ENCODE measurements at regions of chr9 and their contacts with region 1.

Region 1: DNA sequence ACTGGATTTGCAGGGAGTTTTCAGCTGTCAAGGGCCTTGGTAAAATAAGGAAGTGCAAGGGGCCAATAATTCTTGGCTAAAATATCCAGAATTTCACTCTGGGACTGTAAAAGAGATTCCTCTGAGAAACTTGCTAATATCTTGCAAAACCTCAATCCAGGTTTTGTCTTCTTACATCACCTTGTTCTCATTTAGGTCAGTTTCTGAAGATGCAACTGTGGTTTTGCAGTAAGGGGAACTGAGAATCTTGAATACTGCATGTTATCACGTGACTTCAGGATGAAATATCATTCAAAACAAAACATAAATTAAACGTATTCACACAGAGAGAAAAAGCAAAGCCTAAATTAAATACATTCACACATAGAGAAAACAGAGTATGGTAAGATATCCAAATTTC is 35.0 kb upstream of the RIC1 start:
- DNase-seq: no peak
- H3K4me3 ChIP-seq: no peak overlapping the region
- H3K4me3 Mint-ChIP-seq: no peak overlapping the region
- H3K27ac Mint-ChIP-seq: no peak overlapping the region
- H3K4me1 ChIP-seq: no peaks in the 10 kb centered on the region
- H3K4me1 Mint-ChIP-seq: no peaks in the 10 kb centered on the region
- H3K27me3 ChIP-seq: no peaks in the 10 kb centered on the region
- H3K27me3 Mint-ChIP-seq: peaks cover 3% of the 10 kb centered on the region
- CTCF ChIP-seq: no peak

Region 2: GRCh38 chr9:4984621-4985385 is 609.1 kb before region 1 on chr9 and contains the start of gene JAK2:
- CTCF ChIA-PET with region 1: no interaction called
- POLR2A ChIA-PET with region 1: no interaction called
- intact Hi-C with region 1: loop called (anchors 10 kb)
- DNase-seq: peak; percentile 89 to 90
- H3K4me3 ChIP-seq: peak within 1 kb of the TSS; percentile 63
- H3K4me3 Mint-ChIP-seq: peak within 1 kb of the TSS; percentile 76
- H3K27ac Mint-ChIP-seq: peak within 1 kb of the TSS; percentile 87
- H3K4me1 ChIP-seq: peaks cover 3% of the 10 kb centered on the region; the same call in 1 of the 2 replicates
- H3K4me1 Mint-ChIP-seq: peaks cover 15% of the 10 kb centered on the region
- H3K27me3 ChIP-seq: no peaks in the 10 kb centered on the region
- H3K27me3 Mint-ChIP-seq: peaks cover 5% of the 10 kb centered on the region
- CTCF ChIP-seq: peak; percentile 18 to 28
- total RNA-seq, gene JAK2: 0.86 and 1.4 TPM in 2 replicates

Region 3: GRCh38 chr9:5696884-5697283 is 103.0 kb after region 1 on chr9:
- CTCF ChIA-PET with region 1: no interaction called
- POLR2A ChIA-PET with region 1: no interaction called
- intact Hi-C with region 1: no loop called
- DNase-seq: no peak
- H3K4me3 ChIP-seq: no peak overlapping the region
- H3K4me3 Mint-ChIP-seq: no peak overlapping the region
- H3K27ac Mint-ChIP-seq: no peak overlapping the region
- H3K4me1 ChIP-seq: peaks cover 26% of the 10 kb centered on the region
- H3K4me1 Mint-ChIP-seq: peaks cover 19% of the 10 kb centered on the region
- H3K27me3 ChIP-seq: no peaks in the 10 kb centered on the region
- H3K27me3 Mint-ChIP-seq: no peaks in the 10 kb centered on the region
- CTCF ChIP-seq: no peak

Measured in Caco-2 (cell line).